Posterior vena cava (tissue), 2 donors: ENCODE measurements at regions of chr2 and their contacts with region 1.

Region 1: DNA sequence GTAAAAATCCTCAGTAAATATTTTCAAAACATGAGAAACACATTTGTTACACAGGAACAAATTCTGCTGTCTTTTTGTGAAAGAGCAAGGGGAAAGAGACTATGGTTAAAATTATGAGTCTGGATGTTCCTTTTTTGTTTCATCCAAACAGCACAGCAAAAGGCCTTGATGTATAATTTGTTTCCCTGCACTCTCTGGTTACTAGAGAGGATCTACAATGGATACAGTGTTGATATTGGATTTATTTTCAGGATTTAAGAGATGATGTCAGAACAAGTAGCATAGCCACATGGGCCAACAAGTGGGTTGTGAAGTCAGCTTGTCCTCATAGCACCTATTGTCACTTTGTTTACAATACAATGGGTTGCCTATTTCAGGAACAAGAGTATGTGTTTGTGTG is 11.3 kb upstream of the ERBB4 start:
- DNase-seq: no peak

Region 2: GRCh38 chr2:211745295-211746097 is 804.4 kb before region 1 on chr2:
- intact Hi-C with region 1: loop called in 1 of 2 experiments (anchors 10 kb)
- DNase-seq: no peak

Region 3: DNA sequence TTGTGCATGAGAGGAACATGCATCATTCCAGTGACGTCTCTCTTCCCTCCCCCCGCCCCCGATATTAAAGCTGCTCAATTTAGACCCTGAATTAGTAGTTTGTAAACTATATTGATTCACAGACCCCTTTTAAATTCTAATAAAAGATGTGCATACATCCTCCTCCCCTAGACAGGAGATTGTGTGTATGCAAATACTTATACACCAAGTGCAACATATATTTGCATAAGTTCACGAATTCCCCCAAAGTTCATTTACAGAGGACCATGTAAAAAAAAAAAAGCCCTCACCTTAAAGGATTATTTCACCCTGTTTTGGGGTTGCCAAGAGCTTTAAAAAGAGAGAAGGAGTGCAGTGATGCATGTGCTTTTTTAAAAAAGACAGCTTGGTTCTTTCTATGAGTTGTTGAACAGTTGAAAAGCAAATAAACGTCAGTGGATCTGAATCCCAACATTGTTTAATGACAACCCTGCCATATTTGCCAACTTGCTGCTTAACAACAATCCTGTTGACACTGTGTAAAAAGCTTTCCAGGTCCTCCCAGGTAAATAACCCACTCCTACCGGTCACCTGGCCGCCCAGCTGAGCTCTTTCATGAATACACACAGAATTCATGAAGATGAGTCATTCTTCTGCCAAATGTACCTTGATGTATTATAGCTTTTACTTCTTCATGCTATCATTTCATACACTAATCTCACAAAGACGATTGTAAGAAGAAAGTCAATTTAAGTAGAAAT is 390.0 kb after region 1 on chr2:
- intact Hi-C with region 1: loop called in 1 of 2 experiments (anchors 5 kb)
- DNase-seq: no peak